ENCODE measurements at regions of chr14 and their contacts with region 1.

Region 1: DNA sequence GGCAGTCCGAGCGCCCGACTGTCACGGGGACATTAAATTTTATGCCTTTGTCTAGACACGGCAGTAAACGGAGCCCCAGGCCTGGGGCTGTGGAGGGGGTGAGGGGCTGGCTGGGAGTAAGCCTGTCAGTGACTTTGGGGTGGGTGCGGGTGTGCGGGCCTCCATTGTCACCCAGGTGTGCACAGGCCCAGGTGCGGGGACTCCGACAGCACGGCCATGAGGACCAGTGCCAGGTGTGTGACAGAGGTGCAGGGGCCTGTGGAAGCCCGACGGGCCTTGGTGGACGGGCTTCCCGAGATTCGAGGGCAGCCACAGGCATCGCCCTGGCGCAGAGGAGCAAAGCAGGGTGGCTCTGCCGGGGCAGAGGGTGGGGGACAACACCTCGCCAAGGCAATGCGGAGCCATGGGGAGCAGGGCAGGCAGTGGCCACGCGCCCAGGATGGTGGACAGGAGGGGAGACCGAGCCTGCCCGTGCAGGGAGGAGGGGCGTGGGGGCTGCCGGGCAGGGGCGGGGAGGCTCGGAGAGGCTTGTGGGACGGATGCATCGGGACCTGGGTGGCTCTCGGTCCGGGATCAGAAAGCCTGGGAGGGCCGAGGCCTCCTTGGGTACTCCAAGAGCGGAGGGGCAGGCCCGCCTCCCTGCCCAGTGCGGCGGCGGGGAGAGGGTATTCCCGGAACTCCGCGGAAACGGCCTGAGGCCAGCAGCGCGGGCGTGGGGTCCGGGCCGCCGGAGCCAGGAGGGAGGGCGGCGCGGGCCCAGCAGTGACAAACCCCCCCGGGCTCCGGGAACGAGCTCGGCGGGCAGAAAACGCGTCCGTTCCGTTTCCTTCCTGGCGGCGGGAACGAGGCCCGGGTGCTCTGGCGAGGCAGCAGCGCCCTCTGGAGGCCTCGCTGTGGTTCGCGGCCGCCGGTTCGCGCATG is 1.5 kb downstream of the TMEM121 start:
- DNase-seq: peak; percentile 81
- H3K4me3 ChIP-seq: peak overlapping the region; percentile 39 to 86 (median 64)
- H3K27ac ChIP-seq: peak overlapping the region; percentile 48 to 70 (median 57)
- H3K4me1 ChIP-seq: peaks cover 13 to 39% (median 34%) of the 10 kb centered on the region in 4 donors
- H3K27me3 ChIP-seq: peaks cover 58% of the 10 kb centered on the region
- CTCF ChIP-seq: peak; percentile 60 to 92 (median 83)
- EP300 ChIP-seq: no peak
- POLR2A ChIP-seq: no peak

Region 2: DNA sequence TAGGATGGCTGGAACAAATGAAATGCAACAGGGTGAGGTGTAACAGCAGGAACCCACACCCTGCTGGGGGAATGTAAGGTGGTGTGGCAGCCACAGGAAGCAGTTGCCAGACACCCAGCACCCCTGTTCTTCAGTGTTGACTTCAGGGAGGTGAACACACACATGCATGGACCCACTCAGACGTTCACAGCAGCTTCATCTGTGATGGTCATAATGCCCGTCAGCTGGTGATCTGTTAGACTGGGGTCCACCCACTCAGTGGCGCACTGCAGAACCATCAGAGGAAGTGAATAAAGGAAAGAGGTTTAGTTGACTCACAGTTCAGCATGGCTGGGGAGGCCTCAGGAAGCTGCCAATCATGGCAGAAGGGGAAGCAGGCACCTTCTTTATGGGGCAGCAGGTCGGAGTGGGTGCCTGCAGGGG is 152.3 kb before region 1 on chr14:
- in situ Hi-C with region 1: no loop called
- intact Hi-C with region 1: loop called (anchors 10 kb)
- DNase-seq: no peak
- H3K4me3 ChIP-seq: no peak overlapping the region
- H3K27ac ChIP-seq: no peak overlapping the region
- H3K4me1 ChIP-seq: no peaks in the 10 kb centered on the region
- H3K27me3 ChIP-seq: no peaks in the 10 kb centered on the region
- CTCF ChIP-seq: no peak
- EP300 ChIP-seq: no peak
- POLR2A ChIP-seq: no peak

Region 3: GRCh38 chr14:105448706-105449111 is 79.2 kb before region 1 on chr14:
- in situ Hi-C with region 1: no loop called
- intact Hi-C with region 1: loop called (anchors 5 kb)
- DNase-seq: peak; percentile 66
- H3K4me3 ChIP-seq: no peak overlapping the region
- H3K27ac ChIP-seq: no peak overlapping the region
- H3K4me1 ChIP-seq: peaks cover 0 to 4% (median 3%) of the 10 kb centered on the region in 4 donors
- H3K27me3 ChIP-seq: no peaks in the 10 kb centered on the region
- CTCF ChIP-seq: peak; percentile 82 to 92 (median 88)
- EP300 ChIP-seq: no peak
- POLR2A ChIP-seq: no peak

Region 4: DNA sequence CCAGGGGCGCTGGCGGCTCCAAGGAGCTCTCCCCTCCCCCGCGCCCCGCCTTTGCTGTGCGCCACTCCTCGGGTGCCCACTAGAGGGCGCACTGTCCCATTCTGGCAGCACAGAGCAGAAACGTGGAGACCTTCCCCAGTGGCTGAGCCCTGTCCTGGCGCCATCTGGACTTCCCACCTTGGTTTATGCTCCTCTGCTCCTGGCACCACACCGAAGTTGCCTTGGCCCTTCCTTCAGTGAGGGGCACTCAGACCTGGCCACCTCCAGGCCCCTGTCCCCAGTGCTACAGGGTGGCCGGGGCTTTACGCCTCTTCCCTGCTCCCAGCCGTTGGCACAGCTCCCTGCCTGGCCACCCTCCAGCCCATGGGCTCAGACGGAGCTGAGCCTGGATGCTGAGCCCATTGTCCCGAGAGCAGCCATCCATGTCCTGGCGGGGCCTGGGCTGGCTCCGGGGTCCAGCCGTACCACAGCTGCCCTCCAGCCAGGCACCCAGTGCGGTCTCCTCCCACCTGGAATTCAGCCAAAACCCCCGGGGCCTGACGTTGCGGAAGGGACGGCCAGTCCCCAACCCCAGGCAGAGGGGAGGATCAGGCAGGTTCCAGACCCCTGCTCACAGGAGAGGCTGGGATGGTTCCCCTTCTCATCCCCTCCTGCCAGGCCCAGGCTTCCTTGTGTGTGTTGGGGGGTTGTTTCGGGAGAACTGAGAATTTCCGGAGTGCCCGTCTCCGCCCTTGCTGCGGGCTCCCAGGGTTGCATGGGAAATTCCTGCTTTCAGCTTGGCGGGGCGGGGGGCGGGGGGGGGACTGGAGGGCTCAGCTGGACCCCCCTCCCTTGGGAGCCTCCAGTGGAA is 46.7 kb before region 1 on chr14:
- in situ Hi-C with region 1: no loop called
- intact Hi-C with region 1: loop called (anchors 5 kb)
- DNase-seq: peak; percentile 92
- H3K4me3 ChIP-seq: peak overlapping the region; percentile 10 to 44 (median 23)
- H3K27ac ChIP-seq: peak overlapping the region; percentile 91 to 99 (median 98)
- H3K4me1 ChIP-seq: peaks cover 37 to 78% (median 59%) of the 10 kb centered on the region in 4 donors
- H3K27me3 ChIP-seq: peaks cover 44% of the 10 kb centered on the region
- CTCF ChIP-seq: peak; percentile 99 to 100 (median 99)
- EP300 ChIP-seq: no peak
- POLR2A ChIP-seq: peak; percentile 42

Region 5: DNA sequence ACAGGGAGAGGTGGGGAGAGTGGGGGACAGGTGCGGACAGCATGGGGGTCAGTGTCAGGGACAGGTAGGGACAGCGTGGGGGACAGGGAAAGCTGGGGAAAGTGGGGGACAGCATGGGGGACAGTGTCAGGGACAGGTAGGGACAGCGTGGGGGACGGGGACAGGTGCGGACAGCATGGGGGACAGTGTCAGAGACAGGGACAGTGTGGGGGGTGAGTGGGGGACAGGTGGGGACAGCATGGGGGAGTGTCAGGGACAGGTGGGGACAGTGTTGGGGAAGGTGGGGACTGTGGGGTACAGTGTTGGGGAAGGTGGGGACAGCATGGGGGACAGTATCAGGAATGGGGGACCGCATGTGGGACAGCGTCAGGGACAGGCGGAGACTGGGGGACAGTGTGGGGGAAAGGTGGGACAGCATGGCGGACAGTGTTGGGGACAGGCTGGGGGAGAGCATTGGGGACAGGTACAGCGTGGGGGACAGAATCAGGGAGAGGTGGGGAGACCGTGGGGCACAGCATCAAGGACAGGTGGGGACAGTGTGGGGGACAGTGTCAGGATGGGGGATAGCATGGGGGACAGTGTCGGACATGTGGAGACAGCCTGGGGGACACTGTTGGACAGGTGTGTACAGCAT is 94.5 kb after region 1 on chr14:
- in situ Hi-C with region 1: no loop called
- intact Hi-C with region 1: no loop called
- DNase-seq: no peak
- H3K4me3 ChIP-seq: no peak overlapping the region
- H3K27ac ChIP-seq: no peak overlapping the region
- H3K4me1 ChIP-seq: no peaks in the 10 kb centered on the region
- H3K27me3 ChIP-seq: no peaks in the 10 kb centered on the region
- CTCF ChIP-seq: no peak
- EP300 ChIP-seq: no peak
- POLR2A ChIP-seq: no peak

Region 6: GRCh38 chr14:105806566-105806965 is 278.6 kb after region 1 on chr14:
- in situ Hi-C with region 1: no loop called
- intact Hi-C with region 1: no loop called
- DNase-seq: no peak
- H3K4me3 ChIP-seq: no peak overlapping the region
- H3K27ac ChIP-seq: no peak overlapping the region
- H3K4me1 ChIP-seq: no peaks in the 10 kb centered on the region
- H3K27me3 ChIP-seq: no peaks in the 10 kb centered on the region
- CTCF ChIP-seq: no peak
- EP300 ChIP-seq: no peak
- POLR2A ChIP-seq: no peak